A549 (cell line): ENCODE measurements at regions of chr14 and their contacts with region 1.

Region 1: GRCh38 chr14:71753126-71753830 is 179.0 kb upstream of the RGS6 start:
- DNase-seq: peak; percentile 62 to 82
- ATAC-seq: peak; percentile 88 to 95
- H3K4me3 ChIP-seq: no peak overlapping the region
- H3K27ac ChIP-seq: 0 out of 6 replicates have a peak overlapping the region, but pooled peaks of 1 of the 2 experiments have one; percentile 8
- H3K4me1 ChIP-seq: 0 out of 3 replicates have a peak, but pooled peaks cover 4% of the 10 kb centered on the region
- CTCF ChIP-seq: peak; percentile 95
- EP300 ChIP-seq: no peak
- POLR2A ChIP-seq: no peak
- RAD21 ChIP-seq: peak; percentile 98 to 99

Region 2: DNA sequence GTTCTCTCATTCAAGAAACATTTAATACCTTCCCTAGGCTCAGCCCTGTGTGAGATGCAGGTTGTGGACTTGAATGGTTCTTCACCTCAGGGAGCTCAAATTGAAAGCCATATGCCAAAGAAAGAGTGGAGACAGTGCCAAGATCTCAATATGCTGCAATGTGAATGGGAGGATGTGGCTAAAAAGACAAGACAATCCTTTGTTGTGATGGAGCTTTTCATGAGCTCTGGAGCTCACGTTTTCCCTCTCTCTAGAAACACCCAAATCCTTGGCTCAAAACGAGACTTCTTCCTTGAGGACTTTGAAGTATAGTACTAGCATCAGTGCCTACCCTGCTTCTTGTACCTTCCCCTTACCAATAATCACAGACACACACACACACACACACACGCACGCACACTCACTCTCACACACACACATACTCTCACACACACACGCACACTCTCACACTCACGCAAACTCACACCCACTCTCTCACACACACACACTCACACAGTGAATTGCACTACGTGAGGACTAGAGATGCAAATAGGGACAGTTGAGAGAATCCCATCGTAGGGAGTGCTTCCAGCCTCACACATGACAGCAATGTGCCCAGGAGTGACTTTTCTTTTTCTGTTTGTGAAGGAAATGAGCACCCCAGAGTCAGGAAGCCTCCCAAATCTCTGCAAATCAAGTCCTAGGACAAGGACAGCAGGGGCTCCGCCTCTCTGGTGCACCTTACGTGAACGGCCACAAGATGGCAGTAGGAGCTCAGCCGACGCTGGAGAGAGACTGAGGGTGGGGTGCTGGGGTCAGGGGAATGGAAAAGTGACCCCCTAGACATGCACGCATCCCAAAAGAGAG is 614.6 kb before region 1 on chr14:
- CTCF ChIA-PET with region 1: interaction called, 321 read pairs
- POLR2A ChIA-PET with region 1: no interaction called
- DNase-seq: peak; percentile 53 to 61
- ATAC-seq: peak; percentile 89 to 95
- H3K4me3 ChIP-seq: no peak overlapping the region
- H3K27ac ChIP-seq: no peak overlapping the region
- H3K4me1 ChIP-seq: peaks cover 7% of the 10 kb centered on the region; the same call in 2 of the 3 replicates
- CTCF ChIP-seq: peak; percentile 91
- EP300 ChIP-seq: no peak
- POLR2A ChIP-seq: no peak
- RAD21 ChIP-seq: peak; percentile 95

Region 3: DNA sequence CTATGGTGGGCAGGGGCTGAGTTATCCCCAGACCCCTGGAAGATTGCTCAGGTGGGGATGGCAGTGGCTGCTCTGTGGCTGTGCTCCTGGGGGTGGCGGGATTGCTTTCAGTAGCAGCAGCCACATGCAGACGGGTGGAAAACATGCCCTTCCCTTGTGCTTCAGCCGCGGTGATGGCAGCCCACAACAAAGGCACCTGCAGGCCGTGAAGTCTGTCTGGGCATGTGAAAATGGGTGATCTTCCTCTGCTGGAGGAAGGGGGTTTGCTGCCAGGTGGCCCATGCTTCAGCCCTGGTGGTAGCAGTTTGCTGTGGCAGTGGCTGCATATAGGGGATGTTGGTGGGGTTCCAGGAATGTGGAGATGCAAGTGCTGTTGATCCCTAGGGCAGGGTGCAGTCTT is 147.2 kb before region 1 on chr14:
- CTCF ChIA-PET with region 1: no interaction called
- POLR2A ChIA-PET with region 1: no interaction called
- DNase-seq: no peak
- ATAC-seq: no peak
- H3K4me3 ChIP-seq: no peak overlapping the region
- H3K27ac ChIP-seq: no peak overlapping the region
- H3K4me1 ChIP-seq: no peaks in the 10 kb centered on the region
- CTCF ChIP-seq: no peak
- EP300 ChIP-seq: no peak
- POLR2A ChIP-seq: no peak; the same call in 1 of the 2 replicates
- RAD21 ChIP-seq: no peak

Region 4: DNA sequence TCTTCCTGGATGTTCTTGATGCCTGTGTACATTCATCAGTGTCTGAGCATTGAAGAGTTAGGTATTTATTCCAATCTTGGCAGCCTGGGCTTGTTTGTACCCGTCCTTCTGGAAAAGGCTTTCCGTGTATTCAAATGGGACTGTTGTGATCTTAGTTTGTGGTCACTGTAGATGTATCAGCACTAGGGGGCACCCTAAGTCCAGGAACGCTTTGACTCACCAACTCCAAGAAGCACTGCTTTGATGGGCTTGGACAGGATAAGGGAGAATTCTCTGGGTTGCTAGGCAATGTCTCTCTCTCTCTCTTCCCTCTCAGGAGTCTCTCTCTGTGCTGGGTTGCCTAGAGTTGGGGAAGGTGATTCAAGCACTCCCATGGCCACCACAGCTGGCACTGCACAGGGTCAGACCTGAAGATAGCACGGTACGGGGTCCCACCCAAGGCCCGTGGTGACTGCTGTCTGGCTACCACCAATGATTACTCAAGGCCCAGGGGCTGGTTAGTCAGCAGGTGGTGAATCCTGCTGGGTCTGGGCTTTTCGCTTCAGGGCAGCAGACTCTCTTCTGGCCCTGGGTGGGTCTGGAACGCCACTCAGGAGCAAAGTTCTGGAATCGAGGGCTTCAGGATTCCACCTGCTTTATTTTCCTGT is 32.2 kb before region 1 on chr14:
- CTCF ChIA-PET with region 1: interaction called, 11 read pairs
- POLR2A ChIA-PET with region 1: no interaction called
- DNase-seq: peak; percentile 43 to 71
- ATAC-seq: peak; percentile 59 to 92; a peak in 5 of 6 replicates
- H3K4me3 ChIP-seq: no peak overlapping the region
- H3K27ac ChIP-seq: no peak overlapping the region
- H3K4me1 ChIP-seq: no peaks in the 10 kb centered on the region
- CTCF ChIP-seq: peak; percentile 46
- EP300 ChIP-seq: no peak
- POLR2A ChIP-seq: no peak
- RAD21 ChIP-seq: peak; percentile 61 to 78

Region 5: DNA sequence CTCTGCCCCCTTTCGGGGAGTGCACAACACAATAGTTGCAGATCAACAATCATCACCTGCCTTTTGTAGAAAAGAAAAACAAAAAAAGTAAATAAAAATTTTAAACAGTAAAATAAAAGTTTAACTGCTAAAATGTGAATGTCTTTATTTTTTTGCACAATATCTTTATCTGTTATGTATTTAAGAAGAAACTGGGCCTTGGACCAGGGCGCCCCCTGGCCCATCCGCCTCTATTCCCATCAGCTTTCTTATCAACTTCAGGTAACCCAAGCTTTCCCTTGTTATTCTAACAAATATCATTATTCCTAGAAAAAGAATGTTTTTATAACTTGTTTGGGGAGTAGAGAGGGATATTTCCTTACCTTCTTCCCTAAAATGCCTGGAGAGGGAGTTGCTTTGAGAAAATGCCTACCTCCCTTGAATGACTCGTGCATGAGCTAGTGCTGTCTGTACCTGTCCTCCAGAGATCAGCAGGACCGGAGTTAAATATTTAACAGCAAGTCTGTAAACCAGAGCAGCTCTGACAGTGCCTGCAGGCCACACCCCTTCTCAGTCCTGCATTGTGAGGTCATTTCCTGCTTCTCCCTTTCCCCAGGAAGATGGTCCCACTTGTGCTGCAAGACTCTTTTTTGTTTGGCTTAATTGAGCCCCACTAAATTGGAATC is 13.9 kb before region 1 on chr14:
- CTCF ChIA-PET with region 1: interaction called, 45 read pairs
- POLR2A ChIA-PET with region 1: no interaction called
- DNase-seq: peak; percentile 14 to 60
- ATAC-seq: peak; percentile 70 to 76; a peak in 5 of 6 replicates
- H3K4me3 ChIP-seq: no peak overlapping the region
- H3K27ac ChIP-seq: no peak overlapping the region
- H3K4me1 ChIP-seq: peaks cover 8% of the 10 kb centered on the region; the same call in 1 of the 3 replicates
- CTCF ChIP-seq: no peak
- EP300 ChIP-seq: no peak
- POLR2A ChIP-seq: no peak
- RAD21 ChIP-seq: no peak

Region 6: GRCh38 chr14:71776471-71777360 is 23.4 kb after region 1 on chr14:
- CTCF ChIA-PET with region 1: interaction called, 12 read pairs
- POLR2A ChIA-PET with region 1: no interaction called
- DNase-seq: no peak
- ATAC-seq: 0 out of 6 replicates have a peak, but pooled peaks of 1 of the 2 experiments have one; percentile 35
- H3K4me3 ChIP-seq: no peak overlapping the region
- H3K27ac ChIP-seq: no peak overlapping the region
- H3K4me1 ChIP-seq: no peaks in the 10 kb centered on the region
- CTCF ChIP-seq: no peak
- EP300 ChIP-seq: no peak
- POLR2A ChIP-seq: no peak
- RAD21 ChIP-seq: no peak

Region 7: DNA sequence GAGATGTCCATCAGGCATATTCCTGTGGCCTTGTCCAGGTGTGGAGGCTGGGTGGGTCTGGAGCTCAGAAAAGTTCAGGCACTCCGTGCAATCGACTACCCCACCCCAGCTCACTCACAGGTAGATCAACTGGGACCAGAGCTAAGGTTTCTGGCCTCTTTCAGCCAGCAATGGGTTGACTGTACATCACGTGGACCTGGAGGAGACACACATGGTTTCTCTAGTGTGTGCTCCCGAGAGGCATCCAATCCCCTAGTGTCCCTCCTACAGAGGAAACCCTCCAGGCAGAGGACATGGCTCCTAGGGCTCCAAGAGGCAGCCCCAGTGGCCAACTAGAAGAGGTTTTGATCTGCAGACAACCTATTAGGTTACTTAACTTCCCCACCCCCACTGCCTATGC is 59.4 kb after region 1 on chr14:
- CTCF ChIA-PET with region 1: no interaction called
- POLR2A ChIA-PET with region 1: no interaction called
- DNase-seq: no peak
- ATAC-seq: no peak
- H3K4me3 ChIP-seq: no peak overlapping the region
- H3K27ac ChIP-seq: no peak overlapping the region
- H3K4me1 ChIP-seq: no peaks in the 10 kb centered on the region
- CTCF ChIP-seq: no peak
- EP300 ChIP-seq: no peak
- POLR2A ChIP-seq: no peak
- RAD21 ChIP-seq: no peak